ENCODE measurements at regions of chr2 and their contacts with region 1.

Region 1: GRCh38 chr2:199985625-199986207 is 30.3 kb downstream of the MAIP1 start:
- DNase-seq: peak; percentile 38 to 63 (median 41)
- H3K4me3 ChIP-seq: no peak overlapping the region
- H3K27ac ChIP-seq: no peak overlapping the region
- H3K4me1 ChIP-seq: no peaks in the 10 kb centered on the region
- H3K27me3 ChIP-seq: no peaks in the 10 kb centered on the region
- CTCF ChIP-seq: peak in 2 of 3 donors; percentile 24 to 34
- EP300 ChIP-seq: no peak
- POLR2A ChIP-seq: no peak

Region 2: GRCh38 chr2:200306196-200306930 is 320.6 kb after region 1 on chr2 and contains the start of gene SPATS2L:
- intact Hi-C with region 1: loop called (anchors 10 kb)
- DNase-seq: peak; percentile 81 to 86 (median 83)
- H3K4me3 ChIP-seq: peak within 1 kb of the TSS; percentile 73
- H3K27ac ChIP-seq: peak within 1 kb of the TSS; percentile 95
- H3K4me1 ChIP-seq: peaks cover 5% of the 10 kb centered on the region
- H3K27me3 ChIP-seq: no peaks in the 10 kb centered on the region
- CTCF ChIP-seq: no peak
- EP300 ChIP-seq: no peak
- POLR2A ChIP-seq: peak; percentile 22
- total RNA-seq, gene SPATS2L: 36.5 to 88.2 (median 70.6) TPM

Measured in ovary (tissue), 10 donors.